CD4-positive, alpha-beta T cell (primary cell): ENCODE measurements at regions of chr4 and their contacts with region 1.

Region 1: GRCh38 chr4:113750296-113750695 is 11.2 kb downstream of the CAMK2D start:
- DNase-seq: no peak
- ATAC-seq: no peak
- H3K4me3 ChIP-seq: no peak overlapping the region
- H3K4me3 Mint-ChIP-seq: no peak overlapping the region
- H3K27ac ChIP-seq: no peak overlapping the region
- H3K27ac Mint-ChIP-seq: no peak overlapping the region
- H3K4me1 ChIP-seq: no peaks in the 10 kb centered on the region
- H3K4me1 Mint-ChIP-seq: peaks cover 39% of the 10 kb centered on the region
- H3K27me3 ChIP-seq: no peaks in the 10 kb centered on the region
- H3K27me3 Mint-ChIP-seq: no peaks in the 10 kb centered on the region
- CTCF ChIP-seq: no peak

Region 2: GRCh38 chr4:113708250-113708649 is 42.0 kb before region 1 on chr4:
- CTCF ChIA-PET with region 1: no interaction called
- POLR2A ChIA-PET with region 1: interaction called, 3 read pairs
- intact Hi-C with region 1: loop called in 1 of 2 experiments (anchors 5 kb)
- DNase-seq: no peak
- ATAC-seq: no peak
- H3K4me3 ChIP-seq: no peak overlapping the region
- H3K4me3 Mint-ChIP-seq: no peak overlapping the region
- H3K27ac ChIP-seq: no peak overlapping the region
- H3K27ac Mint-ChIP-seq: no peak overlapping the region
- H3K4me1 ChIP-seq: no peaks in the 10 kb centered on the region
- H3K4me1 Mint-ChIP-seq: peaks cover 56% of the 10 kb centered on the region
- H3K27me3 ChIP-seq: no peaks in the 10 kb centered on the region
- H3K27me3 Mint-ChIP-seq: no peaks in the 10 kb centered on the region
- CTCF ChIP-seq: no peak

Region 3: DNA sequence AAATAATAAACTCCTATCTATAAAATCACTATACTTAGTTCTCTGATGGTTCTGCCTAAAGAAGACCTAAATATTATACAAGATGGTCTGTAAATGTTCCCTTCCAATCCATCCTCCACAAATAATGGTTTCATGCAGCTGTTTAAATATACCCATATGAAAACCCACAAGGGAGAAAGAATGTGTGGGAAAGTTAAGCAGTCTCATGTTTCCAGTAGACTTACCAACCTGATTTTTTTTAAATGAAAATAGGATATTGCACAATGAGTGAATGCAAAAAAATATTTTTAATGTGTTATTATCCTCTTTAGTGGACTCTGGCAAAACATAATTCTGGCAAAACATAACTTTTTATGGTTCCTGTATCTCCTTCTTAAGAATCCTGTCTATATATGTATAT is 12.0 kb before region 1 on chr4:
- CTCF ChIA-PET with region 1: no interaction called
- POLR2A ChIA-PET with region 1: no interaction called
- intact Hi-C with region 1: no loop called
- DNase-seq: no peak
- ATAC-seq: no peak
- H3K4me3 ChIP-seq: no peak overlapping the region
- H3K4me3 Mint-ChIP-seq: no peak overlapping the region
- H3K27ac ChIP-seq: no peak overlapping the region
- H3K27ac Mint-ChIP-seq: no peak overlapping the region
- H3K4me1 ChIP-seq: peaks cover 3% of the 10 kb centered on the region
- H3K4me1 Mint-ChIP-seq: peaks cover 66% of the 10 kb centered on the region
- H3K27me3 ChIP-seq: no peaks in the 10 kb centered on the region
- H3K27me3 Mint-ChIP-seq: no peaks in the 10 kb centered on the region
- CTCF ChIP-seq: no peak

Region 4: GRCh38 chr4:113969709-113970334 is 219.5 kb after region 1 on chr4:
- CTCF ChIA-PET with region 1: no interaction called
- POLR2A ChIA-PET with region 1: no interaction called
- intact Hi-C with region 1: no loop called
- DNase-seq: no peak
- ATAC-seq: no peak
- H3K4me3 ChIP-seq: no peak overlapping the region
- H3K4me3 Mint-ChIP-seq: no peak overlapping the region
- H3K27ac ChIP-seq: no peak overlapping the region
- H3K27ac Mint-ChIP-seq: no peak overlapping the region
- H3K4me1 ChIP-seq: no peaks in the 10 kb centered on the region
- H3K4me1 Mint-ChIP-seq: no peaks in the 10 kb centered on the region
- H3K27me3 ChIP-seq: peaks cover 0 to 5% of the 10 kb centered on the region in 2 experiments
- H3K27me3 Mint-ChIP-seq: no peaks in the 10 kb centered on the region
- CTCF ChIP-seq: no peak